ENCODE measurements at regions of chr2 and their contacts with region 1.

Region 1: DNA sequence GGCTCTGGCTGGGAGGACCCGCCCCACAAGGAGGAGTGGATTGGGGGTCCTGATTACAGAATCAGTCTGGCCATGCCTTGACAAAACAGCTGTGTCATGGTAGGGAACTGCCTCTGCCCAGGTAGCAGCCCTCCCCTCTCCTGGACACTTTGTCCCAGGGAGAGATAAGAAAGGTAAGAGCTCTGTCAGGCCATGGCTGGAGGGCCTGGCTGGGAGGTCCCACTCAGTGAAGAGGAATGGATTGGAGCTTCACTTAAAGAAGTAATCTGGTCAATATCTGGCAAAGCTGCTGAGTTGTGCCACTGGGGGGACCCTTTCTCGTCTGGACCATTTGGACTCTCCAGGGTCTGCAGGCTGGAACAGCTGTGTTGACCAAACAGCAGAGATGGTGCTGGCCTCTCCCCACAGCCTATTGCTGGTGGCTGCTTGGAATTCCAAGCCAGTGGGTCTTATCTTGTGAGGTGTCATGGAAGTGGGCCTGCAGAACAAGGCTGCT is 75.4 kb downstream of the EPC2 start:
- DNase-seq: no peak
- ATAC-seq: no peak
- H3K4me3 Mint-ChIP-seq: no peak overlapping the region
- H3K27ac Mint-ChIP-seq: no peak overlapping the region
- H3K4me1 Mint-ChIP-seq: peaks cover 93% of the 10 kb centered on the region
- H3K27me3 Mint-ChIP-seq: no peaks in the 10 kb centered on the region
- CTCF ChIP-seq: no peak

Region 2: GRCh38 chr2:148614322-148615049 is 105.5 kb before region 1 on chr2:
- CTCF ChIA-PET with region 1: no interaction called
- POLR2A ChIA-PET with region 1: interaction called, 11 read pairs
- intact Hi-C with region 1: no loop called
- DNase-seq: no peak
- ATAC-seq: peak; percentile 89
- H3K4me3 Mint-ChIP-seq: peak overlapping the region; percentile 0
- H3K27ac Mint-ChIP-seq: peak overlapping the region; percentile 59
- H3K4me1 Mint-ChIP-seq: peaks cover 20% of the 10 kb centered on the region
- H3K27me3 Mint-ChIP-seq: no peaks in the 10 kb centered on the region
- CTCF ChIP-seq: no peak

Region 3: DNA sequence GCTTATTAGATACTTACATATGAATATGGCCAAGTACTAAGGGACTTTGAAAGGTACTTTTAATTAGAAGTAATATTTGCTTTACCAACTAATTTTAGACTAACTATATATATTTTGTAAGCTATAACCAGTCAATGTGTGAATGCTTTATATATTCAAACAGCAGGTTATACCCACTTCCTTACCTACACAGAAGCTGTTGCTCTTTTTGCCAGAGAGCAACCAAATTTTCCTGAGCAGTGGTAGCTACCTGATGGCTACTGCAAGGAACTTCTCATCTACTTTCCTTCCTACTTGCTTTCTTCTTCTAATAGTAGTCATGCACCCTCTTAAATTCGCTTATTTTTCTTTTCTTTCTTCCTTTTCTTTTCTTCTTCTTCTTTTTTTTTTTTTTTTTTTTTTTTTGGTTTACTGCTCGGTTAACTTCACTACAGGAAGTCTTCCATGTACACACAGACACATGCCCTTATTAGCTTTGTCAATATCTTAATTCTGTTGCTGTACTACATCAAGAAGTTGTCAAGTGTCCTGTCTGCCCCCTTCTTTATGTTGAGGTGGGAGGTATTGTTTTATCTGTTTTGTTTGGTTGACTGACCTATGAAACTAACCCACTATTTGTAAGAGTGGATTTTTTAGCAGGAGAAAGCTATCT is 19.6 kb after region 1 on chr2:
- CTCF ChIA-PET with region 1: no interaction called
- POLR2A ChIA-PET with region 1: no interaction called
- intact Hi-C with region 1: loop called (anchors 2 kb)
- DNase-seq: no peak
- ATAC-seq: no peak
- H3K4me3 Mint-ChIP-seq: no peak overlapping the region
- H3K27ac Mint-ChIP-seq: peak overlapping the region; percentile 18
- H3K4me1 Mint-ChIP-seq: peaks cover 52% of the 10 kb centered on the region
- H3K27me3 Mint-ChIP-seq: no peaks in the 10 kb centered on the region
- CTCF ChIP-seq: no peak

Region 4: GRCh38 chr2:150143087-150143536 is 1423.1 kb after region 1 on chr2:
- CTCF ChIA-PET with region 1: no interaction called
- POLR2A ChIA-PET with region 1: no interaction called
- intact Hi-C with region 1: no loop called
- DNase-seq: no peak
- ATAC-seq: no peak
- H3K4me3 Mint-ChIP-seq: no peak overlapping the region
- H3K27ac Mint-ChIP-seq: no peak overlapping the region
- H3K4me1 Mint-ChIP-seq: no peaks in the 10 kb centered on the region
- H3K27me3 Mint-ChIP-seq: no peaks in the 10 kb centered on the region
- CTCF ChIP-seq: no peak